ENCODE measurements at regions of chr5 and their contacts with region 1.

Region 1: DNA sequence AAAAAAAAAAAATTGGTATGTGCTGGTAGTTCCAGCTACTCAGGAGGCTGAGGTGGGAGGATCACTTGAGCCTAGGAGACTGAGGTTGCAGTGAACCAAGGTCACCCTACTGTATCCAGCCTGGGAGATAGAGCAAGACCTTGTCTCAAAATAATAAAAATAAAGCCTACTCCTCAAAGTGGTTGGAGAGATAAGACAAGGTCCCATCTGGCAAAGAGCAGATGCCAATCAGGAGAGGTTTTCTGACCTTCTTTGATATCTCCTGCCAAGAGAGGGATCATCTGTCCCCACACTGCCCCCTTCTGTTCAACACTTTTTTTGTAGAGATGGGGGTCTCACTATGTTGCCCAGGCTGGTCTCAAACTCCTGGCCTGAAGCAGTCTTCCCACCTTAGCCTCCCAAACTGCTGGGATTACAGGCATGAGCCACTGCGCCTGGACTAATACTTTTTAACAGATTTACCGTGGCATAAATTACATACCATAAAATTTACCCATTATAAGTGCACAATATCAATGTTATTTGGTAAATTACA is 64.7 kb downstream of the SH3PXD2B start:
- DNase-seq: no peak
- H3K4me3 ChIP-seq: no peak overlapping the region
- H3K27ac ChIP-seq: no peak overlapping the region
- H3K4me1 ChIP-seq: no peaks in the 10 kb centered on the region
- H3K27me3 ChIP-seq: no peaks in the 10 kb centered on the region
- CTCF ChIP-seq: no peak

Region 2: DNA sequence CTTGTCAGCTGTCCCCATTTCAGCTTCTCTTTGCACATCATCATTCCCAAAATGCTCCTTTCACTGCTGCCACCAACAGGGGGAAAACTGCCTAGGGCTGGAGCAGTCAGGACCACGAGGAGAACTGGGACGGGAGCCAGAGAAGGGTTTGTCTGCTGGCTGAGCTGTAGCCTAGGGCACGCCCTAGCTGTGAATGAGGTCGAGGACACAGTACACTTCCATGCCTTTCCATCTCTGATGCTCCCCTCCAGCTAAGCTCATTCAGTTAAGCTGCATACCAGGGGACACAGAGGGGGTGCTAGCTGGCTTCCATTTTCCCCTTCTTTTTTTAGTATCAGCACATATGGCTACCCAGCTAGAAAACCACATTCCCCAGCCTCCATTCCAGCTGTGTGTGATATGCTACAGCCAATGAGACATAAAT is 266.4 kb before region 1 on chr5:
- intact Hi-C with region 1: loop called (anchors 5 kb)
- DNase-seq: no peak
- H3K4me3 ChIP-seq: no peak overlapping the region
- H3K27ac ChIP-seq: no peak overlapping the region
- H3K4me1 ChIP-seq: no peaks in the 10 kb centered on the region
- H3K27me3 ChIP-seq: no peaks in the 10 kb centered on the region
- CTCF ChIP-seq: peak in 1 of 3 experiments; percentile 6